ENCODE measurements at regions of chr15 and their contacts with region 1.

Region 1: GRCh38 chr15:68795298-68795848 is 25.3 kb downstream of the ANP32A start:
- DNase-seq: peak; percentile 91
- ATAC-seq: peak; percentile 95
- H3K4me3 Mint-ChIP-seq: peak overlapping the region; percentile 40
- H3K27ac Mint-ChIP-seq: peak overlapping the region; percentile 99
- H3K4me1 Mint-ChIP-seq: peaks cover 90% of the 10 kb centered on the region
- H3K27me3 Mint-ChIP-seq: no peaks in the 10 kb centered on the region
- CTCF ChIP-seq: no peak

Region 2: DNA sequence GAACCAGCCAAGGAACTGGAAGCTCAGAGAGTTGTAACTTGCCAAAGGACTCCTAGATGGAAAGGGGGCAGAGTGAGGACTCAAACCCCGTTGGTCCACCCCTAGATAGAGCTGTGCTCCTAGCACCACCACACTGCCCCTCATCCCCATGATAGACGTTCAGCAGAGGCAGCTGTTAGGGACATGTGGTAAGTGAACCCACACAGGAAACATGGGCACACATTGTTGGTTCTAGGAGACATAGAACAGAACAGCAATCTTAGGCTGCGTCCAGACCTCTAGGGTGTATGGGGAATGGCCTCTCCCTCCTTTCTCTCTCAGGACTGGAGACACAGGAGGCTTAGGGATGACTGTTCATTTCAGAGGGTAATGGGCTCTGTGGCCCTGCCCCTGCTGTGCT is 77.4 kb before region 1 on chr15:
- CTCF ChIA-PET with region 1: no interaction called
- POLR2A ChIA-PET with region 1: no interaction called
- DNase-seq: no peak
- ATAC-seq: no peak
- H3K4me3 Mint-ChIP-seq: no peak overlapping the region
- H3K27ac Mint-ChIP-seq: no peak overlapping the region
- H3K4me1 Mint-ChIP-seq: no peaks in the 10 kb centered on the region
- H3K27me3 Mint-ChIP-seq: no peaks in the 10 kb centered on the region
- CTCF ChIP-seq: no peak

Region 3: DNA sequence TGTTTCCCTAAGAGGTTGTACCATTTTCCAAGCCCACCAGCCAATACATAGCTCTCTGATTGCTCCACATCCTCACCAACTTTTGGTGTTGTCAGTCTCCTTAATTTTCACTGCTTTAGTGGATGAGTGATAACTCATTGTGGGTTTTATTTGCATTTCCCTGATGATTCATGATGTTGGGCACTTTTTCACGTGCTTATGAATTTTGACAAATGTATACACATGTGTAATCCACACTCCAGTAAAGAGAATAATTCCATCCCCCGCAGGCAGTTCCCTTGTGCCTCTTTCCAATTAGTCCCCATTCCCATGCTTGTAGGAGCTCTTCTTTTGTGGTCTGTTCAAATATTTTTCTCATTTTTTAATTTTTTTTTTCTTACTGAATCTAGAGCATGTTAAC is 27.1 kb before region 1 on chr15:
- CTCF ChIA-PET with region 1: no interaction called
- POLR2A ChIA-PET with region 1: no interaction called
- DNase-seq: no peak
- ATAC-seq: no peak
- H3K4me3 Mint-ChIP-seq: no peak overlapping the region
- H3K27ac Mint-ChIP-seq: no peak overlapping the region
- H3K4me1 Mint-ChIP-seq: no peaks in the 10 kb centered on the region
- H3K27me3 Mint-ChIP-seq: peaks cover 8% of the 10 kb centered on the region; the same call in 1 of the 2 replicates
- CTCF ChIP-seq: no peak

Region 4: DNA sequence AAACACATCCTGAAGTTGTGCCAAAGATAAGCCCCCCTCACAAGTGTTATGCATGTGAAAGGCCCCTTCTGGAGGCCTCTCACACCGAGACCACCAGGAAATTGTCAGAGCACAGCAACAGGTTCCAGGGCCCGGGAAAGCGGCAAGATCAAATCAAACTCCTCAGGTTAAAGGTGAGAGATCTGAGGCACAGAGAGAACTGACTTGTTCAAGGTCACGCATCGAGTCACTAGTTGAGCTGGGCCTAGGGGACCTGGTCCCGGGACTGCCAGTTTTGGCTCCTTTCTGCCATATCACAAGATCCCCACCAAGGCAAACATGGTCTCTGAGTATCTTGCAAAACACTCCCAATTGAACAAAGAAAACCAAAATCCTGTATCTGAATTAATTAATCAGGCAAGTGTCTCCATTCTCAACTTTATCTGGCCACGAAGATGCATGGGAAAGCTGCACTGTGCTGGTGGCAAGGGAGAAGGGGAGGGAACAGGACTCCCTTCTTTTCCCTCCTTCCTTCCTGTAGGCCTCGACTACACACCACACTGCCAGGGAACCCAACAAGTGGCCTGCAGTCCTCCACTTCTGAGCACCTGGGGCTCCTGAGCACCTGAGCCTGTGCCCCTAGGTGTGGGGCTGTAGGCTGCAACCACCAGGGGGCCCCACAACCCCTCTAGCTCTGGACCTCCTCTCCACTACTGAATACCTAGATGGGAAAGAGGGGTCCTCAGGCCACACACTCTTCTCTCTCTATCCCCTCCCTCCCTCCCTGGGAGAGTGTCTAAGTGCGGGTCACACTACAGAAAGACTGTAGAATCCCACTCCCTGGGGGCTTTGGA is 11.9 kb before region 1 on chr15:
- CTCF ChIA-PET with region 1: interaction called, 12 read pairs
- POLR2A ChIA-PET with region 1: interaction called, 3 read pairs
- DNase-seq: peak; percentile 77
- ATAC-seq: peak; percentile 93
- H3K4me3 Mint-ChIP-seq: 0 out of 2 replicates have a peak overlapping the region, but pooled peaks have one; percentile 1
- H3K27ac Mint-ChIP-seq: peak overlapping the region; percentile 83
- H3K4me1 Mint-ChIP-seq: peaks cover 37% of the 10 kb centered on the region
- H3K27me3 Mint-ChIP-seq: no peaks in the 10 kb centered on the region
- CTCF ChIP-seq: peak; percentile 74

Region 5: GRCh38 chr15:68820295-68821189 is 25.2 kb after region 1 on chr15 and contains the start of gene ANP32A:
- CTCF ChIA-PET with region 1: interaction called, 6 read pairs
- POLR2A ChIA-PET with region 1: interaction called, 41 read pairs
- DNase-seq: peak; percentile 97
- ATAC-seq: peak; percentile 77
- H3K4me3 Mint-ChIP-seq: peak within 1 kb of the TSS; percentile 99
- H3K27ac Mint-ChIP-seq: peak within 1 kb of the TSS; percentile 98
- H3K4me1 Mint-ChIP-seq: peaks cover 39% of the 10 kb centered on the region
- H3K27me3 Mint-ChIP-seq: peaks cover 41% of the 10 kb centered on the region
- CTCF ChIP-seq: no peak
- total RNA-seq, gene ANP32A: 232 to 253 TPM (median 242 TPM) in 3 replicates